ENCODE measurements at regions of chr20 and their contacts with region 1.

Region 1: GRCh38 chr20:3115190-3116107 is 30.9 kb upstream of the AVP start:
- H3K4me3 ChIP-seq: no peak overlapping the region
- H3K27ac ChIP-seq: no peak overlapping the region
- H3K4me1 ChIP-seq: no peaks in the 10 kb centered on the region; the same call in 1 of the 2 replicates
- CTCF ChIP-seq: peak; percentile 71; the same call in 1 of the 2 replicates

Region 2: GRCh38 chr20:3129094-3129493 is 13.6 kb after region 1 on chr20:
- CTCF ChIA-PET with region 1: interaction called, 10 read pairs
- POLR2A ChIA-PET with region 1: no interaction called
- H3K4me3 ChIP-seq: no peak overlapping the region
- H3K27ac ChIP-seq: no peak overlapping the region
- H3K4me1 ChIP-seq: peaks cover 3% of the 10 kb centered on the region; the same call in 1 of the 2 replicates
- CTCF ChIP-seq: no peak

Measured in HEK293 (cell line).